ENCODE measurements at regions of chrX and their contacts with region 1.

Region 1: GRCh38 chrX:19887911-19888879 is 795 bp upstream of the SH3KBP1 start:
- DNase-seq: peak; percentile 69 to 74
- H3K4me3 ChIP-seq: peak overlapping the region in 2 of 3 donors; percentile 38 to 51
- H3K27ac ChIP-seq: peak overlapping the region; percentile 62 to 90 (median 73)
- H3K4me1 ChIP-seq: peaks cover 0 to 3% of the 10 kb centered on the region in 2 donors
- H3K27me3 ChIP-seq: no peaks in the 10 kb centered on the region
- CTCF ChIP-seq: peak in 4 of 6 experiments; percentile 51 to 69 (median 62)
- POLR2A ChIP-seq: peak in 1 of 2 donors; percentile 57

Region 2: GRCh38 chrX:19372170-19372546 is 516.0 kb before region 1 on chrX:
- intact Hi-C with region 1: loop called (anchors 10 kb)
- DNase-seq: peak; percentile 66 to 74
- H3K4me3 ChIP-seq: peak overlapping the region in 1 of 3 donors; percentile 12
- H3K27ac ChIP-seq: no peak overlapping the region
- H3K4me1 ChIP-seq: no peaks in the 10 kb centered on the region
- H3K27me3 ChIP-seq: no peaks in the 10 kb centered on the region
- CTCF ChIP-seq: peak; percentile 13 to 73 (median 56)
- POLR2A ChIP-seq: no peak

Region 3: DNA sequence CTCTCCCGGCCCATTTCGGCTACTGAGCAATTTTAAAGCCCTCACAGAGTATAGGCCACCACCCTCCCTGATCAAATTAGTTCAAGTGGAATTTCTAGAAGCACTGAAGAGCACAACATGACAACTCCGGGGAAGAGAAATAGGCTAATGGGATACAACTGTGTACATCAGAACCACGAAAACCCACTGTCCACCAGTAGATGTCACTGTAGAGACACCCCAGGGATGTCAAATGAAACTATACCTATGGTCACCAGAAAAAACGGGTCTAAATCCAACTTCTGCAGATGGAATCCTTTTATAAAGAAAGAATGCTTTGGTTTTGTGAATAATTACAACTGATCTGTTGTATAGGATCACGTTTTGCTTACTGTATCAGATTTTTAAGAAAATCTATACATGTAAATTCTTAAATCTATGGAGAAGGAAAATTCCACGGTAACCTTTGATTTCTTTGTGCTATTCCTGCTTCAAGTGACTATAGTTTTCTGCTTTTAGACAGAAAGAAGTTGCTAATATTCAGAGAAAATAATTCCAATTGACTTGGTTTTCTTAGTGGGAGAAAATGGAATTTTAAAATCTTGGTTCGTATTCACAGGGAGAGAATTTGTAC is 343.4 kb before region 1 on chrX:
- intact Hi-C with region 1: loop called (anchors 5 kb)
- DNase-seq: peak; percentile 50 to 58
- H3K4me3 ChIP-seq: no peak overlapping the region
- H3K27ac ChIP-seq: no peak overlapping the region
- H3K4me1 ChIP-seq: no peaks in the 10 kb centered on the region
- H3K27me3 ChIP-seq: no peaks in the 10 kb centered on the region
- CTCF ChIP-seq: peak; percentile 53 to 76 (median 66)
- POLR2A ChIP-seq: no peak

Region 4: GRCh38 chrX:19709812-19710518 is 178.2 kb before region 1 on chrX:
- intact Hi-C with region 1: no loop called
- DNase-seq: no peak
- H3K4me3 ChIP-seq: no peak overlapping the region
- H3K27ac ChIP-seq: no peak overlapping the region
- H3K4me1 ChIP-seq: no peaks in the 10 kb centered on the region
- H3K27me3 ChIP-seq: no peaks in the 10 kb centered on the region
- CTCF ChIP-seq: no peak
- POLR2A ChIP-seq: no peak

Region 5: GRCh38 chrX:19947612-19948011 is 59.4 kb after region 1 on chrX:
- intact Hi-C with region 1: no loop called
- DNase-seq: no peak
- H3K4me3 ChIP-seq: no peak overlapping the region
- H3K27ac ChIP-seq: no peak overlapping the region
- H3K4me1 ChIP-seq: no peaks in the 10 kb centered on the region
- H3K27me3 ChIP-seq: no peaks in the 10 kb centered on the region
- CTCF ChIP-seq: no peak
- POLR2A ChIP-seq: no peak

Region 6: GRCh38 chrX:20091499-20091898 is 203.3 kb after region 1 on chrX:
- intact Hi-C with region 1: no loop called
- DNase-seq: no peak
- H3K4me3 ChIP-seq: no peak overlapping the region
- H3K27ac ChIP-seq: no peak overlapping the region
- H3K4me1 ChIP-seq: no peaks in the 10 kb centered on the region
- H3K27me3 ChIP-seq: no peaks in the 10 kb centered on the region
- CTCF ChIP-seq: no peak
- POLR2A ChIP-seq: no peak

Region 7: DNA sequence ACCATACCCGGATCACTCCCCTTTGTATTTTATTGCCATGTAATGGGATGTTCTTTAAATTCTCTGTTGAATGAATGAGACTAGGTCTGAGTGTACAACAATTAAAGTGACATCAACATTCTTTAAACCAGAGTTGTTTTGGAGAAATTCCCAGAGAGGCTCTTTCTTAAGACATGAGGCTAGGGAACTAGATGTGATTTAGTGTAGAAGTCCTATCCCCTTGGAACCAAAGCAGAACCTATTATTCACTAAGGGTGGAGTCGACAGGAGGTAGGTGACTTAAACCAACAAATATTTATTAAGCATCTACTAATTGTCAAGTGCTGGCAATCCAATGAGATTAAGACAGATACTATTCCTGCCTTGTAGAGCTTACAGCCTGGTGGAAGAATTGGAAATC is 251.8 kb after region 1 on chrX:
- intact Hi-C with region 1: no loop called
- DNase-seq: no peak
- H3K4me3 ChIP-seq: peak overlapping the region in 1 of 3 donors; percentile 95
- H3K27ac ChIP-seq: no peak overlapping the region
- H3K4me1 ChIP-seq: peaks cover 15 to 17% of the 10 kb centered on the region in 2 donors
- H3K27me3 ChIP-seq: no peaks in the 10 kb centered on the region
- CTCF ChIP-seq: no peak
- POLR2A ChIP-seq: no peak